ENCODE measurements at regions of chr2 and their contacts with region 1.

Region 1: DNA sequence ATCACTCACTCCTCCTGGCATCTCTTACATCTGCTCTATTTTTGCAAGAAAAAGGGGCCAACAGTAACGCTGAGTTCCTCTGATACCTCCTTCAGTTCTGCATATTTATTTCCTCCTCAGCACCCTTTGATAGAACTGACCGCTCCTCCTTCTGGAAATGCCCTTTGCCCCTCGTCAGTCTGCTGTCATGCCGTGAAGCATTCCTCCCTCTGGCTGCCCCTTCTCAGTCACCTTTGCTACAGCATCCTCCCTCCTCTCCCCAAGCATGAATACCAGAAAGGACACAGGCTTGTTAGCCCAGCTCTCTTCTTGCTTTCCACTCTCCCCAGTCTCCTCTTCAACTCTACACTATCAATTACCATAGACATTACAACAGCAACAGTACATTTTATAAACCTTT is 135.4 kb downstream of the NBAS start:
- DNase-seq: peak; percentile 70 to 76
- H3K4me3 ChIP-seq: no peak overlapping the region
- H3K4me3 Mint-ChIP-seq: peak overlapping the region; percentile 8
- H3K27ac Mint-ChIP-seq: no peak overlapping the region
- H3K4me1 ChIP-seq: peaks cover 15% of the 10 kb centered on the region
- H3K4me1 Mint-ChIP-seq: peaks cover 18% of the 10 kb centered on the region
- H3K27me3 ChIP-seq: no peaks in the 10 kb centered on the region
- H3K27me3 Mint-ChIP-seq: no peaks in the 10 kb centered on the region
- CTCF ChIP-seq: no peak

Region 2: GRCh38 chr2:15006667-15007066 is 419.0 kb before region 1 on chr2:
- CTCF ChIA-PET with region 1: no interaction called
- POLR2A ChIA-PET with region 1: no interaction called
- intact Hi-C with region 1: loop called (anchors 10 kb)
- DNase-seq: no peak
- H3K4me3 ChIP-seq: no peak overlapping the region
- H3K4me3 Mint-ChIP-seq: no peak overlapping the region
- H3K27ac Mint-ChIP-seq: no peak overlapping the region
- H3K4me1 ChIP-seq: no peaks in the 10 kb centered on the region
- H3K4me1 Mint-ChIP-seq: no peaks in the 10 kb centered on the region
- H3K27me3 ChIP-seq: no peaks in the 10 kb centered on the region
- H3K27me3 Mint-ChIP-seq: no peaks in the 10 kb centered on the region
- CTCF ChIP-seq: no peak

Measured in Caco-2 (cell line).